Activated CD4-positive, alpha-beta T cell treated with anti-CD3 and anti-CD28 coated beads for 36 hours (primary cell): ENCODE measurements at regions of chr2 and their contacts with region 1.

Region 1: GRCh38 chr2:147045113-147045512 is 799.7 kb upstream of the ACVR2A start:
- DNase-seq: peak; percentile 68
- ATAC-seq: peak; percentile 65
- H3K4me3 Mint-ChIP-seq: no peak overlapping the region
- H3K27ac Mint-ChIP-seq: no peak overlapping the region
- H3K4me1 Mint-ChIP-seq: peaks cover 6% of the 10 kb centered on the region
- H3K27me3 Mint-ChIP-seq: no peaks in the 10 kb centered on the region

Region 2: DNA sequence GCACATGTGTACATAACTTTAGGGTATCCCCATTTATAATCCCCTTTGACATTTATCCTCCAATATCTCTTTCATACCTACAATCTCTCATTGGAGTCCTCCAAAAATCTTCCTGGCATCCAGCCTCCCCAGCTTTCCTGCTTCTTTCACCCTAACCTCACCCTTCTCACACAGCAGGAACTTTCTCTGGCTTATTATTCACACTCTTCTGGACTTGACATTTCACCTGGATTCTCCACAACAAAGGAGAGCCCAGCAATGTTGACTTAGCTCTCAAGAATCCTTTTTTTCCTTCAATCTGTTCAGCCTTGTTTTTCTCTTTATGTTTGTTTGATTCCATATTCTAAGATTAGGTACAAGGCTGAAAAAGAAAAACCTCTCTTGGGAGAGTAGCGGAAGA is 16.2 kb after region 1 on chr2:
- CTCF ChIA-PET with region 1: interaction called, 18 read pairs
- POLR2A ChIA-PET with region 1: no interaction called
- intact Hi-C with region 1: no loop called
- DNase-seq: no peak
- ATAC-seq: no peak
- H3K4me3 Mint-ChIP-seq: no peak overlapping the region
- H3K27ac Mint-ChIP-seq: no peak overlapping the region
- H3K4me1 Mint-ChIP-seq: no peaks in the 10 kb centered on the region
- H3K27me3 Mint-ChIP-seq: peaks cover 8% of the 10 kb centered on the region

Region 3: GRCh38 chr2:147068071-147068470 is 23.0 kb after region 1 on chr2:
- CTCF ChIA-PET with region 1: interaction called, 18 read pairs
- POLR2A ChIA-PET with region 1: no interaction called
- intact Hi-C with region 1: no loop called
- DNase-seq: no peak
- ATAC-seq: no peak
- H3K4me3 Mint-ChIP-seq: no peak overlapping the region
- H3K27ac Mint-ChIP-seq: no peak overlapping the region
- H3K4me1 Mint-ChIP-seq: peaks cover 5% of the 10 kb centered on the region
- H3K27me3 Mint-ChIP-seq: peaks cover 8% of the 10 kb centered on the region

Region 4: GRCh38 chr2:147082850-147083522 is 37.9 kb after region 1 on chr2:
- CTCF ChIA-PET with region 1: interaction called, 11 read pairs
- POLR2A ChIA-PET with region 1: no interaction called
- intact Hi-C with region 1: no loop called
- DNase-seq: peak; percentile 59
- ATAC-seq: peak; percentile 75
- H3K4me3 Mint-ChIP-seq: no peak overlapping the region
- H3K27ac Mint-ChIP-seq: no peak overlapping the region
- H3K4me1 Mint-ChIP-seq: peaks cover 2% of the 10 kb centered on the region
- H3K27me3 Mint-ChIP-seq: peaks cover 1% of the 10 kb centered on the region

Region 5: GRCh38 chr2:147331790-147332419 is 286.8 kb after region 1 on chr2:
- CTCF ChIA-PET with region 1: interaction called, 15 read pairs
- POLR2A ChIA-PET with region 1: no interaction called
- intact Hi-C with region 1: loop called (anchors 1 kb)
- DNase-seq: peak; percentile 67
- ATAC-seq: peak; percentile 61
- H3K4me3 Mint-ChIP-seq: no peak overlapping the region
- H3K27ac Mint-ChIP-seq: no peak overlapping the region
- H3K4me1 Mint-ChIP-seq: peaks cover 12% of the 10 kb centered on the region
- H3K27me3 Mint-ChIP-seq: no peaks in the 10 kb centered on the region